ENCODE measurements at regions of chr1 and their contacts with region 1.

Region 1: GRCh38 chr1:109426278-109427170 is at the start of gene PSMA5:
- DNase-seq: peak; percentile 87 to 99 (median 93)
- ATAC-seq: peak; percentile 90
- H3K4me3 ChIP-seq: peak within 1 kb of the TSS; percentile 83 to 84
- H3K4me3 Mint-ChIP-seq: peak within 1 kb of the TSS; percentile 98
- H3K27ac ChIP-seq: peak within 1 kb of the TSS; percentile 80 to 90
- H3K27ac Mint-ChIP-seq: peak within 1 kb of the TSS; percentile 99
- H3K4me1 ChIP-seq: peaks cover 39% of the 10 kb centered on the region
- H3K4me1 Mint-ChIP-seq: peaks cover 39% of the 10 kb centered on the region
- H3K27me3 ChIP-seq: no peaks in the 10 kb centered on the region
- H3K27me3 Mint-ChIP-seq: no peaks in the 10 kb centered on the region
- CTCF ChIP-seq: no peak
- total RNA-seq, gene PSMA5: 30.9 to 32.6 TPM

Region 2: GRCh38 chr1:109090196-109091077 is 336.1 kb before region 1 on chr1 and contains the start of gene TMEM167B:
- CTCF ChIA-PET with region 1: interaction called, 3 read pairs
- POLR2A ChIA-PET with region 1: no interaction called
- intact Hi-C with region 1: loop called in 1 of 2 experiments (anchors 5 kb)
- DNase-seq: peak; percentile 76 to 94 (median 88)
- ATAC-seq: peak; percentile 94
- H3K4me3 ChIP-seq: peak within 1 kb of the TSS; percentile 84 to 96
- H3K4me3 Mint-ChIP-seq: peak within 1 kb of the TSS; percentile 96
- H3K27ac ChIP-seq: peak within 1 kb of the TSS; percentile 82 to 98
- H3K27ac Mint-ChIP-seq: peak within 1 kb of the TSS; percentile 95
- H3K4me1 ChIP-seq: peaks cover 20% of the 10 kb centered on the region
- H3K4me1 Mint-ChIP-seq: peaks cover 33% of the 10 kb centered on the region
- H3K27me3 ChIP-seq: no peaks in the 10 kb centered on the region
- H3K27me3 Mint-ChIP-seq: no peaks in the 10 kb centered on the region
- CTCF ChIP-seq: no peak
- total RNA-seq, gene TMEM167B: 66.3 to 68.0 TPM

Region 3: DNA sequence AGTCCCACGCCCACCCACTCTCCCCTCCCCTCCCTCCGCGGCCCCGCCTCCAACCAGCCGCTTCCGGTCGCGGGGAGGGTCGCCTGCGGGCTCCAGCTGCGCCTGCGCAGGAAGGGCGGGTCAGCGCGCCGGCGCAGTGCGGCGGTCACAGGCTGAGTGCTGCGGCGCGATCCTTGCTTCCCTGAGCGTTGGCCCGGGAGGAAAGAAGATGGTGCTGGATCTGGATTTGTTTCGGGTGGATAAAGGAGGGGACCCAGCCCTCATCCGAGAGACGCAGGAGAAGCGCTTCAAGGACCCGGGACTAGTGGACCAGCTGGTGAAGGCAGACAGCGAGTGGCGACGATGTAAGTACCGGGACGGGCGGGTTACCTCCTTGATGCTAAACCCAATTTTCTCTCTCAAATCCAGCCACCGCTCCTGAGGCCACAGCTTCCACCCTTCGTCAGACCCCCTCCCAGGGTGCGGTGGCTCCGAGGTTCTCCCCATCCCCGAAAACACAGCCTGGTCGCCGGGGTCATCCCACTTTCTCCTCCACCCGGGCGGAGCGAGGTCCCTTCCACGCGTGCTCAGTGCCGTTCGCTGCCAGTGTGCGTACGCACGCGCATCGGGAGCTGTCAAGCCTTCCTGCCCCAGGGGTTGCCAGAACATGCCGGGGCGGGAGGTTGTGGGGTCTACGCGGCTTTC is 212.6 kb before region 1 on chr1 and contains the start of gene SARS1:
- CTCF ChIA-PET with region 1: no interaction called
- POLR2A ChIA-PET with region 1: interaction called, 3 read pairs
- intact Hi-C with region 1: loop called in 1 of 2 experiments (anchors 1 kb)
- DNase-seq: peak; percentile 67 to 94 (median 85)
- ATAC-seq: peak; percentile 86
- H3K4me3 ChIP-seq: peak within 1 kb of the TSS; percentile 96 to 100
- H3K4me3 Mint-ChIP-seq: peak within 1 kb of the TSS; percentile 100
- H3K27ac ChIP-seq: peak within 1 kb of the TSS; percentile 79
- H3K27ac Mint-ChIP-seq: peak within 1 kb of the TSS; percentile 95
- H3K4me1 ChIP-seq: peaks cover 27% of the 10 kb centered on the region
- H3K4me1 Mint-ChIP-seq: peaks cover 44% of the 10 kb centered on the region
- H3K27me3 ChIP-seq: no peaks in the 10 kb centered on the region
- H3K27me3 Mint-ChIP-seq: peaks cover 2% of the 10 kb centered on the region
- CTCF ChIP-seq: no peak
- total RNA-seq, gene SARS1: 113 to 118 TPM

Region 4: DNA sequence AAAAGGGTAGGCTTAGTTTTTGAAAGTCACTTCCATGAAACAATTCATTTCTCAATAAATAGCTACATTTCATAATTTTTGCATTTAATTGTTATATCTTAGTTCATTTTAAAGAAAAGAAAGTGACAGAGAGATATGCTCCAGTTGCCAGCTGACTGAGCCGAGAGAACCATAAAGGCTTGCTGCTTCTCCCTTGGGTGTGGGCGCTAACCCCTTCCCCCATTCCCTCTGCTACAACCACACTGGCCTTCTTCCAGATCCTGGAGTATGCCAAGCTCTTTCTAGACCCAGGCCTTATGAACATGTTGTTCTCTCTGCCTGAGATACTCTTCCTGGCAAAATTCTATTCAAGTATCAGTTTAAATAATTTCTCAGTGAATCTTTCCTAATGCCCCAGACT is 41.1 kb before region 1 on chr1:
- CTCF ChIA-PET with region 1: no interaction called
- POLR2A ChIA-PET with region 1: no interaction called
- intact Hi-C with region 1: no loop called
- DNase-seq: no peak
- ATAC-seq: no peak
- H3K4me3 ChIP-seq: no peak overlapping the region
- H3K4me3 Mint-ChIP-seq: no peak overlapping the region
- H3K27ac ChIP-seq: no peak overlapping the region
- H3K27ac Mint-ChIP-seq: no peak overlapping the region
- H3K4me1 ChIP-seq: no peaks in the 10 kb centered on the region
- H3K4me1 Mint-ChIP-seq: no peaks in the 10 kb centered on the region
- H3K27me3 ChIP-seq: no peaks in the 10 kb centered on the region
- H3K27me3 Mint-ChIP-seq: peaks cover 12% of the 10 kb centered on the region
- CTCF ChIP-seq: no peak

Region 5: DNA sequence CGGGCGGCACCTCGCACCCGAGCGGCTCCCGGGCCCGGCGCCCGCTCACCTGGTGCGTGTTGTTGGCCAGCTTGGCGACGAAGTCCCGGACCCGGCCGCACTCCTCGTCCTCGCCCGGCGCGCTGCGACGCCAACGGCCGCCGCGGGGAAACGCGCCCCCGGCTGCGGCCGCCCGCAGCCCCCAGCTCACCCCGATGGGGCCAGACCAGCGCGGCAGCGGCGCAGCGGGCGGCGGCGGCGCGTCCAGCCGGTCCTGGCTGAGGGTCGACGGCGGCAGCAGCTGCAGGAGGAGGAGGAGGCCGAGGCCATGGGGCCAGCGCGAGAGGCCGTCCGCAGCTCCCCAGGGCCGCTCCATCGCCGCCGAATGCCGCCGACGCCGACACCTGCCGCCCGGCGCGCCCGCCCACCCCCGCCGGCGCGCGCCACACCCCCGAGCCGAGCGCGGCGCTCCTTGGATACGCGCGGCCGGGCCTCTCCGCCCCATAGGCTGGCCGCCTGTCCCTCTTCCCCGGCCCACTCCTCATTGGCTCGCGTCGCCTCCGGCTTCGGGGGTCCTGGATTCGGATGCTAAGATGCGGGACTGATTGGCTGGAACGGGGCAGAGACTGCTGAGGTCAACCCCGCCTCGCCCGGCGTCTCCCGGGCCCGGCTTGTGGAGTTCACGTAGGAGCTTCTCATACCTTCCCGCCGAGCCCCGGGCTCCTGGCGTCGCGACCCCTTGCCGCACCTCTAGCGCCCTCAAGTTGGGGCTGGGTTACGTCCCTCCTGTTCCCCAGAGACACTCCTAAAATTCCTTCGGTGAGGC is 28.8 kb before region 1 on chr1 and contains the start of gene SORT1:
- CTCF ChIA-PET with region 1: interaction called, 3 read pairs
- POLR2A ChIA-PET with region 1: interaction called, 13 read pairs
- intact Hi-C with region 1: no loop called
- DNase-seq: peak; percentile 25 to 84 (median 71)
- ATAC-seq: peak; percentile 97
- H3K4me3 ChIP-seq: peak within 1 kb of the TSS; percentile 49 to 53
- H3K4me3 Mint-ChIP-seq: peak within 1 kb of the TSS; percentile 83
- H3K27ac ChIP-seq: no peak within 1 kb of the TSS
- H3K27ac Mint-ChIP-seq: no peak within 1 kb of the TSS
- H3K4me1 ChIP-seq: peaks cover 9% of the 10 kb centered on the region
- H3K4me1 Mint-ChIP-seq: peaks cover 15% of the 10 kb centered on the region
- H3K27me3 ChIP-seq: peaks cover 10 to 21% of the 10 kb centered on the region in 2 experiments
- H3K27me3 Mint-ChIP-seq: peaks cover 34% of the 10 kb centered on the region
- CTCF ChIP-seq: no peak
- total RNA-seq, gene SORT1: 0.61 to 0.73 TPM

Region 6: DNA sequence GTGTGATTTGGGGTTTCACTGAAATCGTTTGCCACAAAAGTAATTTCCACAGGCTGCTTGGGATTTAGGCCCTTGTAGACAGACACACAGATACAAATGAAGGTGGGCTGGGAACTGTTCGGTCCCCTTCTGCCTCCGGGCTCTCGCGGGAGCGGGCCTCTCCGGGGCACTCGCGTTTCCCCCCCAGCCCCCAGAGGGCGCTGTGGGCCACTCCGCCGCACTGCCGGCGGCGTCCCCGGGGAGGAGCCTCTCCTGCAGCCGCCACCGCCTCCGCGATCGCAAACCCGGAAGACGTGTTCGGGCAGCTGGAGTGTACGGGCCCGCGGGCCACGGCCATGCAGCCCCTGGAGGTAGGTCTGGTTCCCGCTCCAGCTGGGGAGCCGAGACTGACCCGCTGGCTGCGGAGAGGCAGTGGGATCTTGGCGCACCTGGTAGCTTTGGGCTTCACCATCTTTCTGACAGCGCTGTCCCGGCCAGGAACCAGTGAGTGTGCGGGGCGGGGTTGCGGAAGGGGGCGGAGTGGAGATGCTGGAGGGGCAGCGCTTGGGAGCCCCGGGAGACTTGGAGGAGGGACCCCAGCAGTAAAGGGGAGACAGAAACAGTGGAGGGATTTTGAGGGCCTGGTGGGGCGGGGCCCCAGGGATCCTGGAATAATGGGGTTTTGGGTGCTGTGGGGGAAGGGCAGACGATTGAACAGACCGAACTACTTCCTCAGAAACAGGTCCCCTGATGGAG is 67.4 kb after region 1 on chr1 and contains the start of gene CYB561D1:
- CTCF ChIA-PET with region 1: interaction called, 14 read pairs
- POLR2A ChIA-PET with region 1: interaction called, 5 read pairs
- intact Hi-C with region 1: loop called in 1 of 2 experiments (anchors 1 kb)
- DNase-seq: peak; percentile 79 to 95 (median 88)
- ATAC-seq: peak; percentile 90
- H3K4me3 ChIP-seq: peak within 1 kb of the TSS; percentile 94 to 95
- H3K4me3 Mint-ChIP-seq: peak within 1 kb of the TSS; percentile 95
- H3K27ac ChIP-seq: peak within 1 kb of the TSS; percentile 53 to 58
- H3K27ac Mint-ChIP-seq: peak within 1 kb of the TSS; percentile 85
- H3K4me1 ChIP-seq: peaks cover 49% of the 10 kb centered on the region
- H3K4me1 Mint-ChIP-seq: peaks cover 52% of the 10 kb centered on the region
- H3K27me3 ChIP-seq: no peaks in the 10 kb centered on the region
- H3K27me3 Mint-ChIP-seq: no peaks in the 10 kb centered on the region
- CTCF ChIP-seq: peak; percentile 88
- total RNA-seq, gene CYB561D1: 10.2 to 12.3 TPM

Region 7: GRCh38 chr1:109598655-109599054 is 172.1 kb after region 1 on chr1:
- CTCF ChIA-PET with region 1: no interaction called
- POLR2A ChIA-PET with region 1: no interaction called
- intact Hi-C with region 1: no loop called
- DNase-seq: peak in 1 of 9 experiments; percentile 10
- ATAC-seq: no peak
- H3K4me3 ChIP-seq: no peak overlapping the region
- H3K4me3 Mint-ChIP-seq: no peak overlapping the region
- H3K27ac ChIP-seq: no peak overlapping the region
- H3K27ac Mint-ChIP-seq: no peak overlapping the region
- H3K4me1 ChIP-seq: peaks cover 9% of the 10 kb centered on the region
- H3K4me1 Mint-ChIP-seq: peaks cover 17% of the 10 kb centered on the region
- H3K27me3 ChIP-seq: no peaks in the 10 kb centered on the region
- H3K27me3 Mint-ChIP-seq: no peaks in the 10 kb centered on the region
- CTCF ChIP-seq: no peak

Region 8: DNA sequence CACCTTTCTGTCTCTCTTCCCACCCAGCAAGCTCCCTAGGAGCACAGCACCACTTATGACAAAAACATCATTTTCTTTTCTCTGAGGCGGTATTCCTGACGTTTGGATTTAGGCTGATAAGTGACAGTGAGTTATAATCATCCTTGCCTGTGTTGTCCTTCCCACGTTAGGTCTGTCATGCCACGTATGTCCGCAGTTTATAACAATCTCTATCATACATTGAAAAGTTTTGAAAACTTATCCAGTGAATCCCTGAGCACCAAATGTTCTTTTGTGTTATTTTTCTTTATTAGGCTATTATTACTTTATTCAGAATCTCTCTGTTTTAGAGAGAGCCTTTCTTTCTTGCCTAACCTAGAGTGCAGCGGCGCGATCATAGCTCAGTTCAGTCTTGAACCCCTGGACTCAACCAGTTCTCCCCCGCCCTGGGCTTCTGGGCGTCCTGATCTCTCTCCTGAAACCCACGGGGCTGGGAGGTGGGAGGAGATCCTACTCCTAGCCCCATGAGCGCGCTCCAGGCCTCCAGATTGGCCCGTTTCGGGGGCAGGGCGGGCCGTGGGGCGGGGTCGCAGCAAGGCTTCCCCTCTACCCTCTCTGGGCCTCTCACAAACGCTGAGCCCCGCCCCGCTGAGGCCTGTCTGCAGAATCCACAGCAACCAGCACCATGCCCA is 241.1 kb after region 1 on chr1 and contains the start of gene GSTM2:
- CTCF ChIA-PET with region 1: no interaction called
- POLR2A ChIA-PET with region 1: no interaction called
- intact Hi-C with region 1: loop called in 1 of 2 experiments (anchors 5 kb)
- DNase-seq: peak; percentile 41 to 85 (median 71)
- ATAC-seq: peak; percentile 99
- H3K4me3 ChIP-seq: peak within 1 kb of the TSS; percentile 27 to 49
- H3K4me3 Mint-ChIP-seq: peak within 1 kb of the TSS; percentile 86
- H3K27ac ChIP-seq: no peak within 1 kb of the TSS
- H3K27ac Mint-ChIP-seq: peak within 1 kb of the TSS; percentile 66
- H3K4me1 ChIP-seq: peaks cover 6% of the 10 kb centered on the region
- H3K4me1 Mint-ChIP-seq: peaks cover 21% of the 10 kb centered on the region
- H3K27me3 ChIP-seq: no peaks in the 10 kb centered on the region
- H3K27me3 Mint-ChIP-seq: no peaks in the 10 kb centered on the region
- CTCF ChIP-seq: no peak
- total RNA-seq, gene GSTM2: 94.0 to 100 TPM

Measured in CD8-positive, alpha-beta T cell (primary cell).